ENCODE measurements at regions of chr7 and their contacts with region 1.

Region 1: DNA sequence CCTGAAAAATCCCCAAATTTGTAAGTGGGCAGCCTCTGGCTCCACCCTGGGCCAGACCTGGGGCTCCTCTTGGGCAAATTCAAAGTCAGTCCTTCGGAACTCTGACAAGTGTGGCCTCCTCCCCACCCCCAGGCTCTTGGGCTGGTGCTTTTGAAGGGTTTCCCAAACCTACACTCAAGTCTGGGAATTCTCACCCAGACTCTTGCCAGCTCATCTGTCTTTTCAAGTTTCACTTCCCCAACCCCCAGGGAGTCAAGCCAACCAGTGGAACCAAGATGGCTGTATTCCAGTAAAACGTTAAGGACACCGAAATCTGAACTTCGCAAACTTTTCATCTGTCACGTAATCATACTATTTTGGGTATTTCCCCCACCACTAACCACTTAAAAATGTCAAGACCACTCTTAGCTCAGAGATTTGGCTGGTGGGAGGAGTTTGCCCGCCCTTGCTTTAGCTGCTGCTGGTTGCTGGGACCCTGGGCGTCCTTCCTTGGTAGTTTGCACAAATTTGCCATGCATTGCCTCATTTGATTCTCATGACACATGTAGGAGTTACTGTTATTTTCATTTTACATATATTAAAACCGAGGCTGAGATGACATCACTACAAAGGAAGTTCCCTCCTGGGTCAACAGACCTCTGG is 1.7 kb upstream of the MYO1G start:
- DNase-seq: peak in 2 of 9 donors; percentile 63 to 69
- ATAC-seq: peak; percentile 38
- H3K4me3 ChIP-seq: peak overlapping the region; percentile 78
- H3K4me3 Mint-ChIP-seq: peak overlapping the region; percentile 39 to 100 (median 70)
- H3K27ac ChIP-seq: peak overlapping the region; percentile 83
- H3K27ac Mint-ChIP-seq: peak overlapping the region; percentile 85 to 99 (median 96)
- H3K4me1 ChIP-seq: peaks cover 60 to 63% of the 10 kb centered on the region in 2 donors
- H3K4me1 Mint-ChIP-seq: peaks cover 54 to 96% (median 68%) of the 10 kb centered on the region in 7 donors
- H3K27me3 ChIP-seq: no peaks in the 10 kb centered on the region
- H3K27me3 Mint-ChIP-seq: no peaks in the 10 kb centered on the region

Region 2: GRCh38 chr7:44044315-44045225 is 935.9 kb before region 1 on chr7 and contains the start of gene DBNL:
- CTCF ChIA-PET with region 1: no interaction called
- POLR2A ChIA-PET with region 1: no interaction called
- intact Hi-C with region 1: loop called in 1 of 2 experiments (anchors 2 kb)
- DNase-seq: peak; percentile 79 to 96 (median 84)
- ATAC-seq: peak; percentile 68
- H3K4me3 ChIP-seq: peak within 1 kb of the TSS; percentile 87
- H3K4me3 Mint-ChIP-seq: peak within 1 kb of the TSS; percentile 84 to 97 (median 92)
- H3K27ac ChIP-seq: peak within 1 kb of the TSS; percentile 93
- H3K27ac Mint-ChIP-seq: peak within 1 kb of the TSS; percentile 86 to 99 (median 96)
- H3K4me1 ChIP-seq: peaks cover 23 to 41% of the 10 kb centered on the region in 2 donors
- H3K4me1 Mint-ChIP-seq: peaks cover 38 to 60% (median 55%) of the 10 kb centered on the region in 7 donors
- H3K27me3 ChIP-seq: no peaks in the 10 kb centered on the region
- H3K27me3 Mint-ChIP-seq: no peaks in the 10 kb centered on the region
- total RNA-seq, gene DBNL: 112 to 182 (median 164) TPM

Region 3: GRCh38 chr7:44145969-44146911 is 834.3 kb before region 1 on chr7:
- CTCF ChIA-PET with region 1: no interaction called
- POLR2A ChIA-PET with region 1: no interaction called
- intact Hi-C with region 1: loop called in 1 of 2 experiments (anchors 5 kb)
- DNase-seq: peak; percentile 21 to 81 (median 51)
- ATAC-seq: peak; percentile 80
- H3K4me3 ChIP-seq: peak overlapping the region; percentile 59
- H3K4me3 Mint-ChIP-seq: peak overlapping the region; percentile 68 to 89 (median 83)
- H3K27ac ChIP-seq: peak overlapping the region; percentile 52
- H3K27ac Mint-ChIP-seq: peak overlapping the region in 8 of 9 donors; percentile 46 to 91 (median 78)
- H3K4me1 ChIP-seq: no peaks in the 10 kb centered on the region
- H3K4me1 Mint-ChIP-seq: peaks cover 0 to 11% (median 7%) of the 10 kb centered on the region in 7 donors
- H3K27me3 ChIP-seq: no peaks in the 10 kb centered on the region
- H3K27me3 Mint-ChIP-seq: peaks cover 0 to 9% (median 0%) of the 10 kb centered on the region in 5 donors

Region 4: GRCh38 chr7:44914992-44915607 is 65.4 kb before region 1 on chr7:
- CTCF ChIA-PET with region 1: no interaction called
- POLR2A ChIA-PET with region 1: no interaction called
- intact Hi-C with region 1: loop called in 1 of 2 experiments (anchors 1 kb)
- DNase-seq: peak in 8 of 9 donors; percentile 44 to 87 (median 74)
- ATAC-seq: peak; percentile 99
- H3K4me3 ChIP-seq: no peak overlapping the region
- H3K4me3 Mint-ChIP-seq: peak overlapping the region in 7 of 10 donors; percentile 12 to 71 (median 53)
- H3K27ac ChIP-seq: peak overlapping the region; percentile 48
- H3K27ac Mint-ChIP-seq: peak overlapping the region in 8 of 9 donors; percentile 61 to 92 (median 84)
- H3K4me1 ChIP-seq: no peaks in the 10 kb centered on the region
- H3K4me1 Mint-ChIP-seq: peaks cover 0 to 28% (median 5%) of the 10 kb centered on the region in 7 donors
- H3K27me3 ChIP-seq: no peaks in the 10 kb centered on the region
- H3K27me3 Mint-ChIP-seq: no peaks in the 10 kb centered on the region

Measured in naive thymus-derived CD4-positive, alpha-beta T cell (primary cell).